Activated T-helper 2 cell treated with anti-CD3 and anti-CD28 coated beads, Interferon-gamma antibody, Interleukin-2, Interleukin-4, amounts not matched to agents 10 μg/mL and 5 μg/mL and 100 μg/mL, durations not matched to agents 14 hours and 24 hours and 36 hours (primary cell): ENCODE measurements at regions of chr11 and their contacts with region 1.

Region 1: DNA sequence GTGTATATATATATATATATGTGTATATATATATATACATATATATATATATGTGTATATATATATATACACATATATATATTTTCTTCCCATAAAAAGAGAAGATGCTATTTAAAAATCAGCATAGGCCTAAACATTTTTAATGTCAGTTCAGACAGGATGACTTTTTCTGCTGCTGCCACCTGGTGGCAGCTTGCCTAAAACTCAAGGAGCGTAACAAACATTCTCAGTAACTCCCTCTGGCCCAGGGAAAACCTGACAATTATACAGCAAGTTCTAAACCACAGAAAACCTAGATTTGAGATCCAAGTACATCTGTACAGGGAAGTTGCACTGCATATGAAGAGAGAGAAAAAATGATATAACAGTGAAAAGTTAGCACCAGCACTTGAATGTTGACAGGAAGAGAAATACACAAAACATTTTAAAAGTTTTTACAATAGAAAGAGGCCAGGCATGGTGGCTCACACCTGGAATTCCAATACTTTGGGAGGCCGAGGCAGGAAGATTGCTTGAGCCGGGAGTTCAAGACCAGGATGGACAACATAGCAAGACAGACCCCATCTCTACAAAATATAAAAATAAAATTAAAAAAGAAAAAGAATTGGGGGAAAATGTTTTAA is 16.6 kb downstream of the OR8A1 start:
- DNase-seq: no peak
- H3K4me3 Mint-ChIP-seq: no peak overlapping the region
- H3K27ac Mint-ChIP-seq: no peak overlapping the region
- H3K4me1 Mint-ChIP-seq: no peaks in the 10 kb centered on the region
- H3K27me3 Mint-ChIP-seq: peaks cover 14% of the 10 kb centered on the region

Region 2: DNA sequence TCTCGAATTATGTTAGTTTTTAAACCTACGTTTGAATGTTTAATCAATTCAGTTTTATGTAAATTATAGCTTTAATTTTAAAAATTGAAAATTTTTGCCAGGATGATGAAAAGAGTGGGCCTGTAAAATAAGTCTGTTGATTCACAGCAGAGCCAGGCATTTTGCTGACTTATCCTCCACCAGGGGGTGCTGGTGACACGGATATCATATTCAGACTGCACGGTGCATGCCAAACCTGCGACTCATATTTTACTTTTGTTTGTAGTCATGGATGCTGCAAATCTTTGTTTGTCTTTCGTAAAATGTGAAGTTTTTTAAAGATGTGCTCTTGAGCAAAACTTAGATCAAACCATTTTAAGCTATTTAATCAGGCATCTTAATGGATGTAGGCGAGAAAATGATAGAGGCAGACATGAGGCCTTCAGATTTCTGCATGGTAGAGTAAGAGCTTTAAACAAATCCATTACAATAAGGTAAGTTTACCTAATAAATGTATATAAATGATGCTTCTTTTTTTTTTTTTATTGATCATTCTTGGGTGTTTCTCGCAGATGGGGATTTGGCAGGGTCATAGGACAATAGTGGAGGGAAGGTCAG is 183.9 kb before region 1 on chr11:
- intact Hi-C with region 1: loop called (anchors 1 kb)
- DNase-seq: peak; percentile 32
- H3K4me3 Mint-ChIP-seq: no peak overlapping the region
- H3K27ac Mint-ChIP-seq: no peak overlapping the region
- H3K4me1 Mint-ChIP-seq: peaks cover 2% of the 10 kb centered on the region
- H3K27me3 Mint-ChIP-seq: peaks cover 9% of the 10 kb centered on the region

Region 3: GRCh38 chr11:124415356-124415923 is 170.9 kb before region 1 on chr11:
- intact Hi-C with region 1: loop called (anchors 1 kb)
- DNase-seq: no peak
- H3K4me3 Mint-ChIP-seq: no peak overlapping the region
- H3K27ac Mint-ChIP-seq: no peak overlapping the region
- H3K4me1 Mint-ChIP-seq: no peaks in the 10 kb centered on the region
- H3K27me3 Mint-ChIP-seq: peaks cover 14% of the 10 kb centered on the region